ENCODE measurements at regions of chr2 and their contacts with region 1.

Region 1: DNA sequence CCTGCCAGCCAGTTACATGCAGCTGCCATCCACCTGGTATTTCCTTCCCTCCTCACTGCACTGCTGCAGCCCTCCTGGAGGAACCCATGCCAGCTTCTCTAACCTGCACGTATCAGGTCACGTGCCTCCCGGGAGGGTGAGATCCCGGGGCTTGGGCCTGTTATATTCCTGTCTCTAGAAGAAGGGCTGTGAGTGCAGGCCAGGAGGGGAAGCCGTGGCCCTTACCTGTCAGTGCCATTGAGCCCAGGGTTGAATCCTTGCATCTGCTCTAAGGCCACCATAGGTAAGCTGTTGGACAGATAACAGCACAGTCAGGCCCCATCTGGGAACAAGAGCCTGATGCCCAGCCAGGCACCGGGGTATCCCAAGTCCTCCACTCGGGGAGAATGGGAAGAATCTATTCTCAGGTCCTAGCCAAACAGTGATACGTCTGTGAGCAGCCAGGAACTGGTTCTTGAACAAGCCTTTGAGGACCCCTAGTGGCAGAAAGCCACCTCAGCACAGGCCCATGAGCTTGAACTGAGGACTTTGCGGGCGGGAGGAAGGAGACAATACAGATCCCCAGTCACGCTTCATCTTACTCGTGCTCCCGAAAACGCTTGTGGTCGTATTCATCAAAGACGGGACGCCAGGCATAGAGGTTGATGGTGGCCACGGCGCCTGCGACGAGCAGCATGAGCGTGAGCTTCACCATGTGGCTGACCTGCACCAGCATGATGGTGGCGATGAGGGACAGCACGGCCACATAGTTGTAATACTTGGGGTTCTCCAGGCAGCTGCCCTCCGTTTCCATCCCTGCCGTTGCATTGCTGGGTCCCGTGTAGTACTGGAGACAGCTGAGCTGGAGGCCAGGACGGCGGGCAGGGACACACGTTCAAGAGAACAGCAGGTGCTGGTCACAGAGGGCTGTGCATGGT is 34.4 kb downstream of the CENPO start:
- DNase-seq: peak; percentile 84
- ATAC-seq: peak; percentile 85
- H3K4me3 Mint-ChIP-seq: no peak overlapping the region
- H3K27ac Mint-ChIP-seq: no peak overlapping the region
- H3K4me1 Mint-ChIP-seq: peaks cover 20% of the 10 kb centered on the region
- H3K27me3 Mint-ChIP-seq: no peaks in the 10 kb centered on the region

Region 2: GRCh38 chr2:24421668-24422067 is 405.9 kb before region 1 on chr2:
- CTCF ChIA-PET with region 1: interaction called, 22 read pairs
- POLR2A ChIA-PET with region 1: no interaction called
- intact Hi-C with region 1: loop called (anchors 1 kb)
- DNase-seq: peak; percentile 80
- ATAC-seq: peak; percentile 81
- H3K4me3 Mint-ChIP-seq: no peak overlapping the region
- H3K27ac Mint-ChIP-seq: no peak overlapping the region
- H3K4me1 Mint-ChIP-seq: no peaks in the 10 kb centered on the region
- H3K27me3 Mint-ChIP-seq: no peaks in the 10 kb centered on the region

Region 3: GRCh38 chr2:24613154-24613814 is 214.3 kb before region 1 on chr2:
- CTCF ChIA-PET with region 1: no interaction called
- POLR2A ChIA-PET with region 1: no interaction called
- intact Hi-C with region 1: loop called in 1 of 2 experiments (anchors 2 kb)
- DNase-seq: peak; percentile 37
- ATAC-seq: peak; percentile 94
- H3K4me3 Mint-ChIP-seq: no peak overlapping the region
- H3K27ac Mint-ChIP-seq: peak overlapping the region; percentile 72
- H3K4me1 Mint-ChIP-seq: peaks cover 21% of the 10 kb centered on the region
- H3K27me3 Mint-ChIP-seq: no peaks in the 10 kb centered on the region

Region 4: DNA sequence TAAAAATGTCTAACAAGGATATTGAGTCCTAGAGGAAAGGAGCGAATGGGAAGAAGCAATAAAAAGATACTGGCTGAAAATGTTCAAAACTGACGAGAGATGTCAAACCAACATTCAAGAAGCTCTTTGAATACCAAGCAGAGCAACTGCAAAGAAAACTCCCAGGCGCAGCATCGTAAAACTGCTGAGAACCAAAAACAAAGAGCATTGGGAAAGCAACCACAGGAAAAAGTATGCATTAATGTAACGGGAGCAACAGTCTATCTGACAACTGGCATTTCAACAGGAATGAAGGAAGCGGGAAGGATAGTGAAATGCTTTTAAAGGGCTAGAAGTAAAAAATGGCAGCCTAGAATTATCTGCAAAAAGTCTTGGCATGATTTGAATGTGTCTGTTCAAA is 39.4 kb after region 1 on chr2:
- CTCF ChIA-PET with region 1: no interaction called
- POLR2A ChIA-PET with region 1: no interaction called
- intact Hi-C with region 1: no loop called
- DNase-seq: no peak
- ATAC-seq: no peak
- H3K4me3 Mint-ChIP-seq: no peak overlapping the region
- H3K27ac Mint-ChIP-seq: no peak overlapping the region
- H3K4me1 Mint-ChIP-seq: peaks cover 5% of the 10 kb centered on the region
- H3K27me3 Mint-ChIP-seq: no peaks in the 10 kb centered on the region